GM12878 (cell line): ENCODE measurements at regions of chr3 and their contacts with region 1.

Region 1: GRCh38 chr3:137013955-137014688 is 56.3 kb downstream of the IL20RB start:
- DNase-seq: peak; percentile 51
- ATAC-seq: peak; percentile 93
- H3K4me3 ChIP-seq: peak overlapping the region; percentile 65
- H3K27ac ChIP-seq: peak overlapping the region; percentile 48
- H3K4me1 ChIP-seq: 0 out of 2 replicates have a peak, but pooled peaks cover 4% of the 10 kb centered on the region
- H3K27me3 ChIP-seq: no peaks in the 10 kb centered on the region
- CTCF ChIP-seq: peak; percentile 78 to 92 (median 78)
- EP300 ChIP-seq: 0 out of 4 replicates have a peak, but pooled peaks of 1 of the 2 experiments have one; percentile 9
- POLR2A ChIP-seq: no peak
- RAD21 ChIP-seq: peak; percentile 99

Region 2: GRCh38 chr3:136196401-136197158 is 817.5 kb before region 1 on chr3:
- CTCF ChIA-PET with region 1: interaction called, 4 read pairs
- POLR2A ChIA-PET with region 1: no interaction called
- RAD21 ChIA-PET with region 1: interaction called, 4 read pairs
- SMC1A ChIA-PET with region 1: no interaction called
- in situ Hi-C with region 1: no loop called
- intact Hi-C with region 1: loop called (anchors 10 kb)
- DNase-seq: peak; percentile 100
- ATAC-seq: peak; percentile 81
- H3K4me3 ChIP-seq: peak overlapping the region; percentile 69
- H3K27ac ChIP-seq: peak overlapping the region; percentile 99
- H3K4me1 ChIP-seq: peaks cover 9% of the 10 kb centered on the region
- H3K27me3 ChIP-seq: no peaks in the 10 kb centered on the region
- CTCF ChIP-seq: no peak
- EP300 ChIP-seq: no peak; a peak in 2 of 4 replicates
- POLR2A ChIP-seq: peak; percentile 89
- RAD21 ChIP-seq: no peak

Region 3: GRCh38 chr3:136350132-136350531 is 664.0 kb before region 1 on chr3:
- CTCF ChIA-PET with region 1: interaction called, 12 read pairs
- POLR2A ChIA-PET with region 1: no interaction called
- RAD21 ChIA-PET with region 1: no interaction called
- SMC1A ChIA-PET with region 1: interaction called, 3 read pairs
- in situ Hi-C with region 1: no loop called
- intact Hi-C with region 1: no loop called
- DNase-seq: no peak
- ATAC-seq: no peak
- H3K4me3 ChIP-seq: no peak overlapping the region
- H3K27ac ChIP-seq: no peak overlapping the region
- H3K4me1 ChIP-seq: peaks cover 6% of the 10 kb centered on the region; the same call in 1 of the 2 replicates
- H3K27me3 ChIP-seq: no peaks in the 10 kb centered on the region
- CTCF ChIP-seq: no peak
- EP300 ChIP-seq: no peak
- POLR2A ChIP-seq: no peak
- RAD21 ChIP-seq: no peak

Region 4: GRCh38 chr3:136396916-136397315 is 617.2 kb before region 1 on chr3:
- CTCF ChIA-PET with region 1: interaction called, 38 read pairs
- POLR2A ChIA-PET with region 1: no interaction called
- RAD21 ChIA-PET with region 1: interaction called, 34 read pairs
- SMC1A ChIA-PET with region 1: interaction called, 34 read pairs
- in situ Hi-C with region 1: loop called (anchors 10 kb)
- intact Hi-C with region 1: loop called (anchors 5 kb)
- DNase-seq: no peak
- ATAC-seq: no peak
- H3K4me3 ChIP-seq: no peak overlapping the region
- H3K27ac ChIP-seq: no peak overlapping the region
- H3K4me1 ChIP-seq: no peaks in the 10 kb centered on the region
- H3K27me3 ChIP-seq: no peaks in the 10 kb centered on the region
- CTCF ChIP-seq: no peak
- EP300 ChIP-seq: no peak
- POLR2A ChIP-seq: no peak
- RAD21 ChIP-seq: no peak

Region 5: DNA sequence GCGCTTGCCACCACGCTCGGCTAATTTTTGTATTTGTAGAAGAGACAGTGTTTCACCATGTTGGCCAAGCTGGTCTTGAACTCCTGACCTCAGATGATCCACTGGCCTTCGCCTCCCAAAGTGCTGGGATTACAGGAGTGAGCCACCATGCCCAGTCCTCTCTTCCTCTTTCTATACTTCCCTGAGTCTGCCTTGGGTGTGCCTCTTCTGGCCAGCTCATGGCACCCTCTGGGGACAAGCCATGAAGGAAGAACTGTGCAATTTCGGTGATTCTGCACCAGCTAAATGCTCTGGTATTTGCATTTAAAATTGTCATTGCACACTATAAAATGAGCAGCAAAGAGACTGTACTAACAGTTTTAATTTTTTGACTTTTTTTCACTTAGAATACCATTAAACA is 10.2 kb after region 1 on chr3:
- CTCF ChIA-PET with region 1: interaction called, 13 read pairs
- POLR2A ChIA-PET with region 1: no interaction called
- RAD21 ChIA-PET with region 1: interaction called, 5 read pairs
- SMC1A ChIA-PET with region 1: interaction called, 4 read pairs
- in situ Hi-C with region 1: no loop called
- intact Hi-C with region 1: no loop called
- DNase-seq: no peak
- ATAC-seq: no peak
- H3K4me3 ChIP-seq: no peak overlapping the region
- H3K27ac ChIP-seq: no peak overlapping the region
- H3K4me1 ChIP-seq: no peaks in the 10 kb centered on the region
- H3K27me3 ChIP-seq: no peaks in the 10 kb centered on the region
- CTCF ChIP-seq: no peak
- EP300 ChIP-seq: no peak
- POLR2A ChIP-seq: no peak
- RAD21 ChIP-seq: no peak